AG04450 (cell line): ENCODE measurements at regions of chr12 and their contacts with region 1.

Region 1: GRCh38 chr12:57261428-57261865 is 10.5 kb upstream of the STAC3 start:
- DNase-seq: no peak
- H3K4me3 ChIP-seq: no peak overlapping the region
- H3K27ac ChIP-seq: no peak overlapping the region
- H3K27me3 ChIP-seq: no peaks in the 10 kb centered on the region
- CTCF ChIP-seq: no peak

Region 2: DNA sequence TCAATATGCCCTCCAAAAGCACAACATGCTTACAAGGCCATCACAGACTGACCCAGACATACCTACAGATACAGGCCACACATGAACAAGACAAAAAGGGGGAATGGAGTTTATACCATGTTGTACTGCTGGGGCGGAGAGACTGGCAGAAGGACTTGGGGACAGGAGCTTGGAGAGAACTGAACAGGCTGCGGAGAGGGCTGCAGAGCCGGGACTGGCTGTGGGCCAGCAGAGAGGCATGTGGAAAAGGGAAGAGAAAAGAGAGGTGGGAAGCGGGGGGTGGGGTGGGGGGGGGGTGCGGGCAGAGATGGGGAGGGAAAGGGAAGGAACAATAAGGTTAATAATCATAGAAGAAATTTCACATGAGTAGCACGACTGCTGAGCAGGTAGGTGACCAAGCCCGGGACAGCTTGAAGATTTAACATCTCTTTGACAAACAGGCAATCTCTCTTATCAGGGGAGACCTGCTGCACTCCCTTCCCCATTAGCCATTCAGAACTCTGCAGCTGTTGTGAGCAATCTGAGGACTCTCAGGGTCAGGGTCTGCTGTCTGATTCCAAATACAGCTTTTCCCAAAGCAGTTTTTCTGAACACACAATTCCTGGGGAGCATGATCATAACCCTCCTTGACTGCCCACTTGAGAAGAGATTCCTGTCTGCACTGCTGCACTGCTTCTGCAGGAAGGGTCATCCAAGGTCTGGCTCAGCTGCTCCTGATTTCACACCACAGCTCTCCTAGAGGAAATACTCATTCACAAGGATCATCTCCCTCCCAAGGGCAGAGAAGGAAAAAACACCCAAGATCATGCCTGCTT is 11.1 kb after region 1 on chr12:
- CTCF ChIA-PET with region 1: interaction called, 21 read pairs
- POLR2A ChIA-PET with region 1: no interaction called
- DNase-seq: no peak
- H3K4me3 ChIP-seq: no peak overlapping the region
- H3K27ac ChIP-seq: peak overlapping the region; percentile 47
- H3K27me3 ChIP-seq: no peaks in the 10 kb centered on the region
- CTCF ChIP-seq: no peak